A673 (cell line): ENCODE measurements at regions of chr13 and their contacts with region 1.

Region 1: GRCh38 chr13:80235166-80235966 is 105.6 kb downstream of the SPRY2 start:
- DNase-seq: peak; percentile 92
- H3K4me3 ChIP-seq: peak overlapping the region; percentile 4
- H3K27ac ChIP-seq: peak overlapping the region; percentile 77
- H3K4me1 ChIP-seq: peaks cover 29% of the 10 kb centered on the region
- H3K27me3 ChIP-seq: no peaks in the 10 kb centered on the region
- CTCF ChIP-seq: no peak

Region 2: DNA sequence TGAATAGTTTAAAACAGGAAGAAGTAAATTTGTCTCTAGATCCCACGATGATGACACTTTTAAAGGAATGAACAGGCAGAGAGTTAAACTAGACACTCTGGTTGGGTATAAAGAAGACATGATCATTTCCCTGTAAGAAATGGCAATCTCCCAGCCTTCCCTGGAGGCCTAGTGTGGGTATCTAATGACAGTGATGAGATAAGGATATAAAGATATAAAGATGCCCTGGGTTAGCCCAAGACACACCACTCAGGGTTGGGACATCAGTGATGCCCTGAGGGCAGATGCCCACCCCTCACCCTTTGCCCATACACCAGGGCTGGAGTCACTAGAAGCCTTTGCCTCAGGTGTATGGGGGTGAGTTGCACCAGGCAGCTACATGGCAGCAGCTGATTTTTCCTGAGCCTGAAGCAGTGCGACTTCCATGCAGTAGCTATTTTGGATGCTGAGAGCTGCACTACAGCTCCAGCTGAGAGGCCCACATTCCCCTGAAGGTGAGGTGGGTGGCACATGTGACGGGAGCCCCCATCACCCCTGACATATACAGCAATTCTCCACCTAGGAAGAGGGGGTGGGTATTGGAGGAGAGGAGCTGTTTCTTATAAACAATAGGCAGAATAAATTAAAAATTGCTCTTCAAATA is 576.9 kb before region 1 on chr13:
- CTCF ChIA-PET with region 1: no interaction called
- POLR2A ChIA-PET with region 1: interaction called, 15 read pairs
- intact Hi-C with region 1: no loop called
- DNase-seq: no peak
- H3K4me3 ChIP-seq: no peak overlapping the region
- H3K27ac ChIP-seq: peak overlapping the region; percentile 8
- H3K4me1 ChIP-seq: peaks cover 25% of the 10 kb centered on the region
- H3K27me3 ChIP-seq: no peaks in the 10 kb centered on the region
- CTCF ChIP-seq: no peak

Region 3: DNA sequence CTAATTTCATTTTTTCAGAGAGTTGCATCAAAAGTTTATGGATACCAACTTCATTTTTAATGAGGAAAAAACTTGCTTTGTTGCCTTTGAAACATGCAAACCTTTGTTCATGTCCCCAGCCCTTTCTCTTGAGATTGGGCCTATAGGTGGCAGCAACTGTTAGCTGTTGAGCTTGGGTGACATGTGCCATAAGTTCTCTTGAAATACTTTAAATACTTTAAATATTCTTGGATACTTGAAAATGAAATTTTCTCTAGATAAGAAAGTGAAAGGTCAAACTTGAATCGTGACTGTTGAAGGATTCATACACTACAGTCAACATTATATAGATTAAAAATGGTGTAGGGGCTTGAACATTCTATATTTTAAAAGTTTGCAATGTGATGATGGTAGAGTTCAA is 459.5 kb before region 1 on chr13:
- CTCF ChIA-PET with region 1: no interaction called
- POLR2A ChIA-PET with region 1: no interaction called
- intact Hi-C with region 1: loop called (anchors 10 kb)
- DNase-seq: peak; percentile 79
- H3K4me3 ChIP-seq: no peak overlapping the region
- H3K27ac ChIP-seq: no peak overlapping the region
- H3K4me1 ChIP-seq: peaks cover 22% of the 10 kb centered on the region
- H3K27me3 ChIP-seq: no peaks in the 10 kb centered on the region
- CTCF ChIP-seq: peak; percentile 83

Region 4: GRCh38 chr13:80083853-80084676 is 151.3 kb before region 1 on chr13:
- CTCF ChIA-PET with region 1: no interaction called
- POLR2A ChIA-PET with region 1: no interaction called
- intact Hi-C with region 1: loop called (anchors 5 kb)
- DNase-seq: peak; percentile 86
- H3K4me3 ChIP-seq: peak overlapping the region; percentile 2
- H3K27ac ChIP-seq: peak overlapping the region; percentile 26
- H3K4me1 ChIP-seq: peaks cover 28% of the 10 kb centered on the region
- H3K27me3 ChIP-seq: no peaks in the 10 kb centered on the region
- CTCF ChIP-seq: no peak

Region 5: DNA sequence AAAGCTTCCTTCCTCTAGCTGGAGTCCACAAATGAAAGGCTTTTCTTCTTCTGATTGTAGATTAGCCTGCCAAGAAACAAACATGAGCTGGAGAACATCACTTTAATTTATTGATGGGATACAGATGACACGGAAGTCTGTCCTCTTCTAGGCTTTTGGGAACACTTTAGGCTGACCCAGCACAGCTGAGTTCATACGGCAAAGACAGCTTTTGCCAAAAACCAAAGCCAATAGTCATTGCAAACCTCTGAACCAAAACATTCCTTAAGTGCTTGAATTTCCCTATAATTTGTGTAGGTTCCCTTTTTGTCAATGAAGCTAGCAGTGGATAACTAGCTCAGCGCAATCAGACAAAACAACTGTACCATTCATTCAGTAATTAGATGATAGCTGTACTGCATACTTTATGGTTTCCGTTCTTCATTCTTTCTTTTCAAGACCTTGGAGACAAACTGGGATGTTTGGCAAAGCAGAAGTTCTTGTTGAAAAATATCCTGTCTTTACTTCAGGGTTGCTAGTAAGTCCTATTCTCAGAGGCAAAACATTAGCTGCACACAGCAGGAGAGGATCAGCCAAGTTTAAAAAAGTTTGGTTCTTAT is 201.3 kb after region 1 on chr13:
- CTCF ChIA-PET with region 1: no interaction called
- POLR2A ChIA-PET with region 1: no interaction called
- intact Hi-C with region 1: loop called (anchors 10 kb)
- DNase-seq: peak; percentile 98
- H3K4me3 ChIP-seq: no peak overlapping the region
- H3K27ac ChIP-seq: peak overlapping the region; percentile 21
- H3K4me1 ChIP-seq: peaks cover 29% of the 10 kb centered on the region
- H3K27me3 ChIP-seq: peaks cover 20% of the 10 kb centered on the region
- CTCF ChIP-seq: no peak